PC-9 (cell line): ENCODE measurements at regions of chr11 and their contacts with region 1.

Region 1: DNA sequence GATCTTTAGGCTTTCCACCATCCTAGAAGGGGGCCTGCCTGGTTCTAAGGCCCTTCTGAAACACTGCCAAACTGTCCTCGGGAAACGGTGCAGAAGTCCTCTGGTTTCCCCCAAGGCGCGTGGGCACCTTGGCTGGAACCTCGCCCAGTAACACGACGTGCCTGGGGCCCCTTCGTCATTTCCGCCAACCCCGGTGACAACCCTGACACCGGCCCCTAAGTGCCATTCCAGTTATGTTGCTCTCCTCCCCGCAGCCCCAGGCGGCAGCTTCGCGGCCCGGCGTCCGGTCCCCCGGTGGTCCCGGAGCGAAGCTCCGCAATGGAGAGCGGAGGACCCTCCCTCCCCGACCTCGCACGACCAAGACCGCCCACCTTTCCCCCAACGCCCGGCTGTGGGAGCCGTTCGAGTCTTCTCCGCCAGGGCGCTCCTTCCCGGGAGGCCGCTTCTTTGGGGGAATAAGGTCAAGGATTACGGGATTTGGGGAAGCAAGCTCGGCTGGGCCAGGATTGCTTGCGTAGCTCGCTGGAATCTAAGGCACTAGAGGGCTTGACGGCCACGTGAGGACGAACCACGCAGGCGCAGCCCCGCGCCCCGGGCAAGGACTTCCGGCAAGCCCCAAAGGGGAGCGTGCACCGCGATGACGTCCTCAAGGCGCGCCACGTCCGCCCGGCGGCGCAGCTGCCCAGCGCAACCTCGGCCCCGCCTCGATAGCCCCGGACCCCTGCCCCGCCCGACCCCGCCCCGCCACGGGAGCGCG is 626 bp downstream of the RNH1 start:
- DNase-seq: peak; percentile 80 to 92
- H3K4me3 ChIP-seq: peak overlapping the region; percentile 100
- H3K27ac ChIP-seq: peak overlapping the region; percentile 99
- H3K4me1 ChIP-seq: peaks cover 5% of the 10 kb centered on the region; the same call in 1 of the 2 replicates
- H3K27me3 ChIP-seq: no peaks in the 10 kb centered on the region
- CTCF ChIP-seq: no peak

Region 2: GRCh38 chr11:406978-407739 is 99.3 kb before region 1 on chr11:
- CTCF ChIA-PET with region 1: no interaction called
- POLR2A ChIA-PET with region 1: interaction called, 10 read pairs
- intact Hi-C with region 1: no loop called
- DNase-seq: peak; percentile 49 to 60
- H3K4me3 ChIP-seq: no peak overlapping the region; the same call in 1 of the 2 replicates
- H3K27ac ChIP-seq: no peak overlapping the region
- H3K4me1 ChIP-seq: no peaks in the 10 kb centered on the region
- H3K27me3 ChIP-seq: no peaks in the 10 kb centered on the region
- CTCF ChIP-seq: no peak

Region 3: DNA sequence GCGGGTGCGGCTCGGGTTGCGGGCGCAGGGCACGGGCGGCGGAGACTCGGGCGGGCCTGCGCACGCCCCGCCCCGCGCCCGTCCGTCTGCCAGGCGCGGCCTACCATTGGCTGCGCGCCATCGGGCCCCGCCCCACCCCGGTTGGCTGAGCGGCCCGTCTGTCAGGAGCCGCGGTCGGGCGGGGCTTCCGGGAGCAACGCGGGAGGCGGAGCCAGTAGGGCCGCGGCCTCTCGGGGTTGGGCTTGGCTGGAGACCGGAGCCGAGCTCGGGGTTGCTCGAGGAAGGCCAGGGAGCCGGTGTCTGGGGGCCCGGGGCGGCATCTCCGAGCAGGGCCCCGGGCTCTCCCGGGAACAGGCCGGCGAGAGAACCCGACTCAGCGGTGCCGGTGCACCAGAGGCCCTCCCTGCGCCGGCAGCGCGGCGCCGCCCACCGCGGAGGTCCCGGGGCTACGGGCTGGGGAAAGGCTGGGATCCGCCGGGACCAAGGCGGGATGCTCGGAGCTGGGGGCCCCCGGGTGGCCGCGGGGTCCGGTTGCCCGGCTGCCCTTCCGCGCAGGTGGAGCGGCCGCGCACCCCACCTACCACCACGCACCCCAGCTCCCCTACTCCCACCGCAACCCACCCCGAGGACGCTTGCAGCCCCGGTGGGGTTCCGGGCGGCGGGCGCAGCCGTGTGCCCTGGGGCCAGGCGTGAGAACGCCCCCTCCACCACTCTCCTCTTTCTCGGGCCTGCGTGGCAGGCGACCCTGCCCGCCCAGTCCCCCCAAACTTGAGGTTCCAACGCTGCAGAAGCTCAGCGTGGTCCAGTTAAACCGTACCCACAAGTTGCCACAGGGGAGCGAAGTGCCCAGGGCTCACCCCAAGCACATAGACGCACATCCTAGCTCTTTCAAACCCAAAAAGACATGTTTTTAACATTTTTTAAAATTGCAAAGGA is 29.4 kb after region 1 on chr11 and contains the start of gene HRAS:
- CTCF ChIA-PET with region 1: no interaction called
- POLR2A ChIA-PET with region 1: interaction called, 4 read pairs
- intact Hi-C with region 1: loop called (anchors 2 kb)
- DNase-seq: peak; percentile 74 to 95
- H3K4me3 ChIP-seq: peak within 1 kb of the TSS; percentile 89
- H3K27ac ChIP-seq: peak within 1 kb of the TSS; percentile 76
- H3K4me1 ChIP-seq: no peaks in the 10 kb centered on the region
- H3K27me3 ChIP-seq: no peaks in the 10 kb centered on the region
- CTCF ChIP-seq: no peak
- total RNA-seq, gene HRAS: 47.2 and 47.5 TPM in 2 replicates